ENCODE measurements at regions of chr14 and their contacts with region 1.

Region 1: DNA sequence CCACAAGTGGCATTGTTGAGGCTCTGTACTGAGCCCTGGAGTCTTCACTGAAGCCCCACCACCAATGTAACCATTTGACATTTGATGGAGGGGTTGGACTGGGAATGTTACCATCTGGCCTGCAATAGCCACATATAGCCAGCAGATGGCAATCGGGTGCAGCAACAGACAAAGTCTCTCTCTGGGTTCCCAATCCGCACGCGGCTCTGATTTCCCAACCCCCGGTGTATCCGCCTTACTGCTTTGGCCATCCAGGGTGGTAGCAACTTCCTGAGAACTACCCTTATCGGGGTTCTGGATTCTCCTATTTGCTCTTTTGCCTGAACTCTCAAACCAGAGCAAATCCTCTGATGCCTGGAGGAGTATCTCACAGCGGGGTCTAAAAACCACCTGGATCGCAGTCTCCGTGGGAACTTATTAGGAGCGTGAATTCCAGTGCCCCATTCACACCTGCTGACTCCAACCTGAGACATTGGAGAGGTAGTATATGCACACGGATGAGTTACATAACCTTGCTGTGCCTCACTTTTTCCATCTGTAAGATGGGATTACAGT is 14.2 kb downstream of the VRTN start:
- DNase-seq: peak; percentile 28 to 78 (median 65)
- ATAC-seq: peak; percentile 75
- H3K4me3 ChIP-seq: no peak overlapping the region
- H3K4me3 Mint-ChIP-seq: no peak overlapping the region
- H3K27ac ChIP-seq: no peak overlapping the region
- H3K27ac Mint-ChIP-seq: no peak overlapping the region
- H3K4me1 ChIP-seq: peaks cover 3% of the 10 kb centered on the region
- H3K4me1 Mint-ChIP-seq: no peaks in the 10 kb centered on the region
- H3K27me3 ChIP-seq: no peaks in the 10 kb centered on the region
- H3K27me3 Mint-ChIP-seq: peaks cover 8% of the 10 kb centered on the region
- CTCF ChIP-seq: peak; percentile 94

Region 2: DNA sequence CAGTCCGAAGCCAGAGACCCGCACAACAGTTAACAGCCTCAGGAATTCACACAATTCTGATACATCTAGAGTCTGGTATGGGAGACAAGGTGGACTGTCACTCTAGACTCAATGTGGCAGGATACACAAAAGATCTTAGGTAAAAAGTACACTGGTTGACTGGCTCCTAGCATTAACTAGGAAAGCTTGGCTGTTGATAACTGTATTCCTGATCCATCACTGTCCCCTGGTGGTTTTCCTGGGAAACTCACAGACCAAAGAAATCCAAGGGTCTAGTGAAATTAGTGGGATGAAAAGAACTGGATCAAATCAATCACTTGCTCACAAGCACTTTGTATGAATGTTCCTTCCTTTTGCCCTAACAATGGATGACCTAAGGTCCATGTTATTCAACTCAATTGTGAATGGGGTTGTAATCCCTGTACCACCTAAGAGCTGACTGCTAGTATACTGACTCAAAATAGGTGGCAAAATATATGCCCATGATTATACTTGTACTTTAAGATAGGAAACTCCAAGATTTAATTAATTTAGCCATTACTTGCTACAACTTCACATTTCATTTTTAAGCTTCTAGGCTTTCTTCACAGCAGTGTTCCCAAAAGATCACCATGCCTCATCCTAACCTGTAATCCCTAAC is 116.7 kb after region 1 on chr14:
- CTCF ChIA-PET with region 1: interaction called, 5 read pairs
- POLR2A ChIA-PET with region 1: no interaction called
- intact Hi-C with region 1: loop called (anchors 1 kb)
- DNase-seq: peak in 2 of 9 experiments; percentile 16 to 23
- ATAC-seq: no peak
- H3K4me3 ChIP-seq: no peak overlapping the region
- H3K4me3 Mint-ChIP-seq: no peak overlapping the region
- H3K27ac ChIP-seq: no peak overlapping the region
- H3K27ac Mint-ChIP-seq: no peak overlapping the region
- H3K4me1 ChIP-seq: no peaks in the 10 kb centered on the region
- H3K4me1 Mint-ChIP-seq: no peaks in the 10 kb centered on the region
- H3K27me3 ChIP-seq: no peaks in the 10 kb centered on the region
- H3K27me3 Mint-ChIP-seq: no peaks in the 10 kb centered on the region
- CTCF ChIP-seq: no peak

Region 3: DNA sequence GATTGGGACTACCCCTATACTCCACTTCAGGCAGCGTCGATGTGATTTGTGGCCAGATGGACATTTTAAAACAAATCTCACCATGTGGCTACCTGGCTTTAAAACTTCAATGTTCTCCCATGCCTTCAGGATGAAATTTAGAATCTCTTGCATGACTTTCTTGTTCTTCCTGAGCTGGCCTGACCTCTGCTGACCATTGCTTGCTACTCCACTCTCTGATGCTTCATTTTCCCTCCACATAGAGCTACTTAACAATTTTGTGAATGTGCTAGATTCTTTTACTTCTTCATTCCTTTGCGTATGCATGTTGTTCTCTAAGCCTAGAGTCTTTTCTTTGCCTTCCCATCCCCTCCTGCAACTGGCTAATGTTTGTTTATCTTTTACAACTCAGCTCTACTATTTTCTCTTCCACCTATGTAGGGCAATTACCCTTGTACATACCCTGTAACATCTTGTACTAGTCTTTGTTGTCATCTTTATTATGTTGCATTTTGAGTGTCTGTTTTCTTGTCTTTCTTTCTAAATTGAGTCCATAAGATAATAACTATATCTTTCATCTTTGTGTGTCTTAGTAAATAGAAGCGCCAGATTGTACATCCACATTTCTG is 441.9 kb after region 1 on chr14:
- CTCF ChIA-PET with region 1: no interaction called
- POLR2A ChIA-PET with region 1: no interaction called
- intact Hi-C with region 1: loop called in 1 of 2 experiments (anchors 1 kb)
- DNase-seq: peak in 4 of 9 experiments; percentile 12 to 47 (median 41)
- ATAC-seq: peak; percentile 63
- H3K4me3 ChIP-seq: no peak overlapping the region
- H3K4me3 Mint-ChIP-seq: no peak overlapping the region
- H3K27ac ChIP-seq: no peak overlapping the region
- H3K27ac Mint-ChIP-seq: no peak overlapping the region
- H3K4me1 ChIP-seq: no peaks in the 10 kb centered on the region
- H3K4me1 Mint-ChIP-seq: peaks cover 12% of the 10 kb centered on the region
- H3K27me3 ChIP-seq: no peaks in the 10 kb centered on the region
- H3K27me3 Mint-ChIP-seq: no peaks in the 10 kb centered on the region
- CTCF ChIP-seq: peak; percentile 51

Measured in CD8-positive, alpha-beta T cell (primary cell).